HepG2 (cell line): ENCODE measurements at regions of chr11 and their contacts with region 1.

Region 1: GRCh38 chr11:57800444-57801182 is 39.0 kb downstream of the CTNND1 start:
- DNase-seq: peak; percentile 98
- ATAC-seq: peak; percentile 97
- H3K4me3 ChIP-seq: no peak overlapping the region
- H3K27ac ChIP-seq: peak overlapping the region; percentile 43
- H3K4me1 ChIP-seq: peaks cover 42% of the 10 kb centered on the region
- H3K27me3 ChIP-seq: no peaks in the 10 kb centered on the region
- CTCF ChIP-seq: peak; percentile 89
- EP300 ChIP-seq: peak in 1 of 2 experiments; percentile 88; a peak in 3 of 4 replicates
- POLR2A ChIP-seq: no peak
- RAD21 ChIP-seq: peak; percentile 94

Region 2: DNA sequence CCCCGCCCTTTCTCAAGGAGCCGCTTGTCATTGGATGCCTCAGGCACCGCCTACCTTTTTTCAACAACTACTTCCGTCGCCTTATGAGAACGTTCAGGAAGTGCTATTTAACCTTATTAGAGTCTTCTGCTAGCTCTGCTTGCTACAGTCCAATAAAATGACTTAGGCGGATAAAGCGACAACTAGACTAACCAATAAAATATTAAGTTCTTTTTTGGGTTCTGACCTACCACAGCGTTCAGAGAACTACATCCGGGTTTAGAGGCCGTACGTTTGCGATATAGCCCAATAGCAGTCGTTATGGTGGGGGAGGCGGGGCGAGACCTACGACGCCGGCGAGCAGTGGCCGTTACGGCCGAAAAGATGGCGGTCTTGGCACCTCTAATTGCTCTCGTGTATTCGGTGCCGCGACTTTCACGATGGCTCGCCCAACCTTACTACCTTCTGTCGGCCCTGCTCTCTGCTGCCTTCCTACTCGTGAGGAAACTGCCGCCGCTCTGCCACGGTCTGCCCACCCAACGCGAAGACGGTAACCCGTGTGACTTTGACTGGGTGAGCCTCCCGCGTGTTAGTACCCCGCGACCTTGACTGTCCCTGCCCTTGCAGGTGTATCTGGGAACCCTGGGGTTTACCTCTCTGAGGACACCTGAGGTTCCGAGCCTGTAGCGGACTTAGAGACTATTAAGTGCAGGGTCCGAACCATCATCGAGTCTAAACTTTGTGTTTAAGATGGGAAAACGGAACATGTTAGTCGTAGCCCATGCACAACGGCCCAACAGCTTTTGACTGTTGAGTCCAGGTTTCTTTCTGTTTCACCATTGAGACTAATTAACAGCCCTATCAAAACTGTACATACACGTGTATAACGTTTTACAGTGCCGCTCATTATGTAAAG is 88.1 kb before region 1 on chr11 and contains the start of gene TMX2:
- CTCF ChIA-PET with region 1: no interaction called
- POLR2A ChIA-PET with region 1: interaction called, 14 read pairs
- in situ Hi-C with region 1: no loop called
- intact Hi-C with region 1: loop called (anchors 1 kb)
- DNase-seq: peak; percentile 100
- ATAC-seq: peak; percentile 95
- H3K4me3 ChIP-seq: peak within 1 kb of the TSS; percentile 92 to 98 (median 92)
- H3K27ac ChIP-seq: peak within 1 kb of the TSS; percentile 82
- H3K4me1 ChIP-seq: peaks cover 29% of the 10 kb centered on the region
- H3K27me3 ChIP-seq: no peaks in the 10 kb centered on the region; a peak in 1 of 5 replicates
- CTCF ChIP-seq: no peak
- EP300 ChIP-seq: no peak
- POLR2A ChIP-seq: peak; percentile 69 to 85
- RAD21 ChIP-seq: no peak
- total RNA-seq, gene TMX2: 67.0 and 129 TPM in 2 replicates

Region 3: GRCh38 chr11:57751676-57752253 is 48.8 kb before region 1 on chr11 and contains the start of gene BTBD18:
- CTCF ChIA-PET with region 1: interaction called, 47 read pairs
- POLR2A ChIA-PET with region 1: interaction called, 19 read pairs
- in situ Hi-C with region 1: no loop called
- intact Hi-C with region 1: loop called (anchors 1 kb)
- DNase-seq: peak; percentile 83
- ATAC-seq: peak; percentile 94
- H3K4me3 ChIP-seq: no peak within 1 kb of the TSS
- H3K27ac ChIP-seq: peak within 1 kb of the TSS; percentile 31
- H3K4me1 ChIP-seq: peaks cover 26% of the 10 kb centered on the region
- H3K27me3 ChIP-seq: no peaks in the 10 kb centered on the region
- CTCF ChIP-seq: peak; percentile 76
- EP300 ChIP-seq: no peak
- POLR2A ChIP-seq: no peak
- RAD21 ChIP-seq: peak; percentile 71
- total RNA-seq, gene BTBD18: not detected in 2 replicates

Region 4: DNA sequence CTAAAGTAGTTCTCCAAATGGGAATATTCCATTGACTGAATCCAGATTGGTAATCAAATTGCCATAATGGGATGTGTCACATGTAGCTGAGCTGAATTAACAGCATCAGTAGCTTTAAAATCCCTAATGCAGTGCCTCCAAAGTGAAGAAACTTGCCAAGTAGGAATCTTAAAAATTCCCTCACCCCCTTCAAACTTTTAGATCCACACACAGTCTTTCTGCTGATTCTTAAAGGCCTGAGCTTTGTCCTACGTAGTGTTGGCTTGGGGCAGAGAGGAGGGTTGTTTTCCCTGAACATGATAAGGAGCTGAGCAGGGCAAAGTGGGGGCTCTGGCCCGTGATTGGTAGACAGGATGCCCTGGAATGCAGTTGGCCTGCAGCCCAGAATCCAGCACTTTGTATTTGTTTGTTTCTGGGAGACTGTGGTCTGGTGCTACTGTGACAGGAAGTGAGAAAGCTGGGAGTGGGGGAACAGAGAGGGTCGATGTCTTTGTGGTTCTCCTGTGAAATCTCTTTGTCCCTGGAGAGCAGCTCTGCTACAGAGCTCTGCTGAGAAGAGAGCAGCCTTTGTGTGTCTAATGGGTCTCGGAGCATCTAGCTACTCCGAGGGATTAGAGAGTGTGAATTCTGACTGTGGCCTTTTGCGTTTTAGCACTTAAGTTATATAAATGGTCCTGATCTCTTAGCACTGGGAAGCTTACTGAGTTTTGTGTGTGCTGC is 22.1 kb before region 1 on chr11:
- CTCF ChIA-PET with region 1: no interaction called
- POLR2A ChIA-PET with region 1: interaction called, 61 read pairs
- in situ Hi-C with region 1: no loop called
- intact Hi-C with region 1: loop called (anchors 1 kb)
- DNase-seq: peak; percentile 99
- ATAC-seq: peak; percentile 95
- H3K4me3 ChIP-seq: peak overlapping the region; percentile 29 to 56 (median 43); a peak in 4 of 6 replicates
- H3K27ac ChIP-seq: peak overlapping the region; percentile 96
- H3K4me1 ChIP-seq: peaks cover 98% of the 10 kb centered on the region
- H3K27me3 ChIP-seq: no peaks in the 10 kb centered on the region
- CTCF ChIP-seq: no peak
- EP300 ChIP-seq: peak; percentile 87 to 96
- POLR2A ChIP-seq: peak; percentile 53 to 90; a peak in 3 of 4 replicates
- RAD21 ChIP-seq: peak; percentile 23; the same call in 1 of the 2 replicates

Region 5: GRCh38 chr11:57888386-57888785 is 87.8 kb after region 1 on chr11:
- CTCF ChIA-PET with region 1: no interaction called
- POLR2A ChIA-PET with region 1: no interaction called
- in situ Hi-C with region 1: no loop called
- intact Hi-C with region 1: no loop called
- DNase-seq: no peak
- ATAC-seq: no peak
- H3K4me3 ChIP-seq: no peak overlapping the region
- H3K27ac ChIP-seq: no peak overlapping the region
- H3K4me1 ChIP-seq: no peaks in the 10 kb centered on the region
- H3K27me3 ChIP-seq: no peaks in the 10 kb centered on the region
- CTCF ChIP-seq: no peak
- EP300 ChIP-seq: no peak
- POLR2A ChIP-seq: no peak
- RAD21 ChIP-seq: no peak

Region 6: DNA sequence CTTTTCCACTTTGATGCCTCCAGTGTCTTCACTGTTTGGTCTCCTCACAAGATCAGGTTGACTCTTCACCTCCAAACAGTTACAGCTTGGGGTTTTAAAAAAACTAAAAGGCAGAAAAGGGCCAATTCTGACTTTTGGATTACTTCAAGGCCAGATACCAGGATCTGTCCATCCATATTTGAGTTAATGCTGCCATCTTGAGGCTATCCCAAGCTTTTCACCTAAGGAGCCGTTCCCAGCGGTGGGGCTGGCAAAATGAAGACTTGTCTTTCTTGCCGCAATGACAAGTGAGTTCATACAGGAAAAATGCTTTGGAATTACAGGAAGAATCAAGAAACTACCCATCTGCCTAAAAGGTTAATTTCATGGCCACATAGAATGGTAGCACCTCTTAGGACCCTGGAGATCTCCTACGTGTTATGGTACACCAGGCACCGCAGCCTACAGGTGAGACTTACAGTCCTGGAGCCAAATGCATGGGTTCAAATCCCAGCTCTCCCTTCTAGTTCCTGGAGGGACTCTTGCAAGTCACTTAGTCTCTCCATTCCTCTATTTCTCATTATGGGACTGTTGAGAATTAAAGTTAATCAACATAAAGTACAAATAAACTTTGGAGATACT is 713.2 kb after region 1 on chr11:
- CTCF ChIA-PET with region 1: no interaction called
- POLR2A ChIA-PET with region 1: no interaction called
- in situ Hi-C with region 1: no loop called
- intact Hi-C with region 1: loop called (anchors 5 kb)
- DNase-seq: peak; percentile 51
- ATAC-seq: peak; percentile 87
- H3K4me3 ChIP-seq: no peak overlapping the region
- H3K27ac ChIP-seq: no peak overlapping the region
- H3K4me1 ChIP-seq: peaks cover 12% of the 10 kb centered on the region
- H3K27me3 ChIP-seq: peaks cover 0 to 5% of the 10 kb centered on the region in 2 experiments; a peak in 1 of 5 replicates
- CTCF ChIP-seq: peak; percentile 82
- EP300 ChIP-seq: no peak
- POLR2A ChIP-seq: no peak
- RAD21 ChIP-seq: peak; percentile 37; the same call in 1 of the 2 replicates

Region 7: DNA sequence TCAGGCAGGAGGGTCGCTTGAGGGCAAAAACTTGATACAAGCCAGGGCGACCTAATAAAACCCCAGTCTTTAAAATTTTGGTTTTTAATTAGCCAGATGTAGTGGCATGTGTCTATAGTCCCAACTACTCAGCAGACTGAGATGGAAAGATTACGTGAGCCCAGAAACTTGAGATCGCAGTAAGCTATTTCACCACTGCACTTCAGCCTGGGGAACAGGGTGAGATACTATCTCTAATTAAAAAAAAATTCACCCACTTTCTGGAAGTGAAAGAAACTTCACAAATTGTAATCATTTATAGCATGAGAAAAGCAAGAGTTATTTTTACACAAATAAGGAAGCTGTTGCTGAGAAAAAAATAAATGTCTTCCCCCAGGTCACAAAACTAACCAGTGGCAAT is 1044.8 kb after region 1 on chr11:
- CTCF ChIA-PET with region 1: no interaction called
- POLR2A ChIA-PET with region 1: no interaction called
- in situ Hi-C with region 1: no loop called
- intact Hi-C with region 1: no loop called
- DNase-seq: no peak
- ATAC-seq: no peak
- H3K4me3 ChIP-seq: no peak overlapping the region
- H3K27ac ChIP-seq: no peak overlapping the region
- H3K4me1 ChIP-seq: no peaks in the 10 kb centered on the region
- H3K27me3 ChIP-seq: no peaks in the 10 kb centered on the region
- CTCF ChIP-seq: no peak
- EP300 ChIP-seq: no peak
- POLR2A ChIP-seq: no peak
- RAD21 ChIP-seq: no peak